ENCODE measurements at regions of chr1 and their contacts with region 1.

Region 1: GRCh38 chr1:241627453-241628259 is 12.5 kb downstream of the CHML start:
- DNase-seq: peak; percentile 92
- H3K4me3 Mint-ChIP-seq: no peak overlapping the region
- H3K27ac Mint-ChIP-seq: peak overlapping the region; percentile 52
- H3K4me1 Mint-ChIP-seq: peaks cover 58% of the 10 kb centered on the region
- H3K27me3 Mint-ChIP-seq: no peaks in the 10 kb centered on the region
- CTCF ChIP-seq: peak; percentile 80

Region 2: DNA sequence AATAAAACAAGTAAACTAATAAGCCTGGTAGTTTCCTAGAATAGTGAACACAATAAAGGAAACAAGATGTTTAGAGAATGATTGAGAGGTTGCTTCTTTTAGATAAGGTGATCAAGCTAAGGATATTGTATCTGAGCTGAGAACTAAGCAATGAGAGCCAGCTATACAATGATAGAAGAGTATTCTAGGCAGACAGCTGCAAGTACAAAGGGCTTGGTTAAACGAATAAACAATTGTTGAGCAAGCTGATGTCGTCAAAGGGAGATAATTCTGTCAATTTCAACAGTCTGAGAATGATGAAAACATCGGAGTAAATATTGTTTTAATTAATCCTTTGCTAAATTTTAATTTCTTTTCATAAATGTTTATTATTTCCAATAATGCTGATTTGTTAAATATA is 102.6 kb before region 1 on chr1:
- CTCF ChIA-PET with region 1: interaction called, 11 read pairs
- POLR2A ChIA-PET with region 1: interaction called, 16 read pairs
- intact Hi-C with region 1: no loop called
- DNase-seq: no peak
- H3K4me3 Mint-ChIP-seq: no peak overlapping the region
- H3K27ac Mint-ChIP-seq: no peak overlapping the region
- H3K4me1 Mint-ChIP-seq: no peaks in the 10 kb centered on the region
- H3K27me3 Mint-ChIP-seq: peaks cover 13% of the 10 kb centered on the region
- CTCF ChIP-seq: no peak

Region 3: DNA sequence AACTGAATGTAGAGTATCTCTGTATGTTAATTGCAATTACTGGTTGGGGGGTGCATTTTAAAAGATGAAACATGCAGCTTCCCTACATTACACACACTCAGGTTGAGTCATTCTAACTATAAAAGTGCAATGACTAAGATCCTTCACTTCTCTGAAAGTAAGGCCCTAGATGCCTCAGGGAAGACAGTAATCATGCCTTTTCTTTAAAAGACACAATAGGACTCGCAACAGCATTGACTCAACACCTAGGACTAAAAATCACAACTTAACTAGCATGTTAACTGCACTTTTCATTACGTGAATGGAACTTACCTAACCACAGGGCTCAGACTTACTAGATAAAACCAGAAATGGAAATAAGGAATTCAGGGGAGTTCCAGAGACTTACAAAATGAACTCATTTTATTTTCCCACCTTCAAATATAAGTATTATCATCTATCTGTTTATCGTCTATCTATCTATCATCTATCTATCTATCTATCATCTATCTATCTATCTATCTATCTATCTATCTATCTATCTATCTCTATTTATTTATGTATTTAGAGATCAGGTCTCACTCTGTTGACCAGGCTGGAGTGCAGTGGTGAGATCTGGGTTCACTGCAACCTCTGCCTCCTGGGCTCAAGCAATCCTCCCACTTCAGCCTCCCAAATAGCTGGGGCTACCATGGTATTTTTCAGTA is 35.2 kb before region 1 on chr1:
- CTCF ChIA-PET with region 1: interaction called, 15 read pairs
- POLR2A ChIA-PET with region 1: no interaction called
- intact Hi-C with region 1: no loop called
- DNase-seq: peak; percentile 98
- H3K4me3 Mint-ChIP-seq: peak overlapping the region; percentile 7
- H3K27ac Mint-ChIP-seq: peak overlapping the region; percentile 76
- H3K4me1 Mint-ChIP-seq: peaks cover 39% of the 10 kb centered on the region
- H3K27me3 Mint-ChIP-seq: no peaks in the 10 kb centered on the region
- CTCF ChIP-seq: no peak

Region 4: GRCh38 chr1:241617426-241617825 is 10.2 kb before region 1 on chr1:
- CTCF ChIA-PET with region 1: interaction called, 173 read pairs
- POLR2A ChIA-PET with region 1: interaction called, 35 read pairs
- intact Hi-C with region 1: no loop called
- DNase-seq: no peak
- H3K4me3 Mint-ChIP-seq: no peak overlapping the region
- H3K27ac Mint-ChIP-seq: no peak overlapping the region
- H3K4me1 Mint-ChIP-seq: peaks cover 42% of the 10 kb centered on the region
- H3K27me3 Mint-ChIP-seq: no peaks in the 10 kb centered on the region
- CTCF ChIP-seq: no peak

Region 5: GRCh38 chr1:241842565-241842964 is 214.9 kb after region 1 on chr1:
- CTCF ChIA-PET with region 1: interaction called, 15 read pairs
- POLR2A ChIA-PET with region 1: interaction called, 5 read pairs
- intact Hi-C with region 1: no loop called
- DNase-seq: no peak
- H3K4me3 Mint-ChIP-seq: no peak overlapping the region
- H3K27ac Mint-ChIP-seq: no peak overlapping the region
- H3K4me1 Mint-ChIP-seq: peaks cover 16% of the 10 kb centered on the region
- H3K27me3 Mint-ChIP-seq: no peaks in the 10 kb centered on the region
- CTCF ChIP-seq: no peak

Measured in MCF 10A (cell line).